Activated CD4-positive, alpha-beta memory T cell treated with anti-CD3 and anti-CD28 coated beads for 36 hours (primary cell): ENCODE measurements at regions of chr22 and their contacts with region 1.

Region 1: GRCh38 chr22:46791201-46791731 is 28.8 kb downstream of the TBC1D22A start:
- DNase-seq: peak; percentile 86
- H3K4me3 Mint-ChIP-seq: peak overlapping the region; percentile 80
- H3K27ac Mint-ChIP-seq: peak overlapping the region; percentile 99
- H3K4me1 Mint-ChIP-seq: peaks cover 57% of the 10 kb centered on the region
- H3K27me3 Mint-ChIP-seq: no peaks in the 10 kb centered on the region

Region 2: GRCh38 chr22:46737976-46738646 is 53.2 kb before region 1 on chr22 and contains the start of gene CERK:
- CTCF ChIA-PET with region 1: no interaction called
- POLR2A ChIA-PET with region 1: no interaction called
- intact Hi-C with region 1: loop called (anchors 1 kb)
- DNase-seq: peak; percentile 72
- H3K4me3 Mint-ChIP-seq: peak within 1 kb of the TSS; percentile 96
- H3K27ac Mint-ChIP-seq: peak within 1 kb of the TSS; percentile 93
- H3K4me1 Mint-ChIP-seq: peaks cover 33% of the 10 kb centered on the region
- H3K27me3 Mint-ChIP-seq: no peaks in the 10 kb centered on the region
- total RNA-seq, gene CERK: 54.4 to 55.0 TPM

Region 3: GRCh38 chr22:46774253-46774979 is 16.9 kb before region 1 on chr22:
- CTCF ChIA-PET with region 1: no interaction called
- POLR2A ChIA-PET with region 1: no interaction called
- intact Hi-C with region 1: loop called (anchors 1 kb)
- DNase-seq: peak; percentile 53
- H3K4me3 Mint-ChIP-seq: peak overlapping the region; percentile 63
- H3K27ac Mint-ChIP-seq: peak overlapping the region; percentile 87
- H3K4me1 Mint-ChIP-seq: peaks cover 76% of the 10 kb centered on the region
- H3K27me3 Mint-ChIP-seq: no peaks in the 10 kb centered on the region